HEK293 (cell line): ENCODE measurements at regions of chr11 and their contacts with region 1.

Region 1: DNA sequence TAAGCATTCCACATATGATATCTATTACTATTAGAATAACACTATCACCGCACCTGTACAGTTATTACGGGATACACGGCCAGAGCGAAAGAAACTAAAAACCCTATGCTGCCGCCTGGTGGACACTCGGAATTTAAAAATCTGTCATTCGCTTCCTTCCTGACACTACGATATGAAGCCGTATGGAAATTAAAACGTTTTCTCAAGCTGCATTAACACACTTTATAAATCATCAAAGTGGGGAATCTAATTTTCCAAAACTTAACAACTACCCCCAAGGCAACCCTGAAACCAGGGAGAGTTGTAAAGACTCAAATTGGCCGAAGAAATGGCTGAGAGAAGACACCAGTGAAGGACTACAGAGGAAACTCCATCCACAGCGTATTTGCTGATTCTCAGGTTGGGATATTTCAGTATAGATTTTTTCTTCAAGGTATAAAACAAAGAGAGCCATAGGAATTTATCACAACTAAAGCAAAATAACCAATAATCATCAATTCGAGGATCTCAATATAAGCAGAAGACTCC is 1.4 kb downstream of the CCDC73 start:
- H3K4me3 ChIP-seq: peak overlapping the region; percentile 17; the same call in 1 of the 2 replicates
- H3K27ac ChIP-seq: no peak overlapping the region
- H3K4me1 ChIP-seq: no peaks in the 10 kb centered on the region
- CTCF ChIP-seq: no peak

Region 2: DNA sequence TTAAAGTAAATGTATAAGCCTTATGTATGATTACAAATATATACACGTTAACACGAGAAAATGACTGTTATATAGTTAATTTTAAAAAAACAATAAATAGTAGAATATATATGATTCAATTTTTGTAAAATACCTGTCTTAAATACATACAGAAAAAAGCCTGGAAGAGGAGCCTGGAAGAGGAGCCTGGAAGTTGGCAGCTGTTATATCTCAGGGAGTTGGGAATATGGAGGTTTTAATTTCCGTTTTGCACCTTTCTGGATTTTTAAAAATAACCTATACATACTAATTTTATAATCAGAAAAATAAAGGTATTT is 469.2 kb before region 1 on chr11:
- CTCF ChIA-PET with region 1: interaction called, 21 read pairs
- POLR2A ChIA-PET with region 1: no interaction called
- H3K4me3 ChIP-seq: no peak overlapping the region
- H3K27ac ChIP-seq: no peak overlapping the region
- H3K4me1 ChIP-seq: no peaks in the 10 kb centered on the region
- CTCF ChIP-seq: no peak

Region 3: GRCh38 chr11:32385998-32386397 is 407.0 kb before region 1 on chr11:
- CTCF ChIA-PET with region 1: interaction called, 16 read pairs
- POLR2A ChIA-PET with region 1: no interaction called
- H3K4me3 ChIP-seq: no peak overlapping the region
- H3K27ac ChIP-seq: no peak overlapping the region
- H3K4me1 ChIP-seq: no peaks in the 10 kb centered on the region; the same call in 1 of the 2 replicates
- CTCF ChIP-seq: no peak

Region 4: DNA sequence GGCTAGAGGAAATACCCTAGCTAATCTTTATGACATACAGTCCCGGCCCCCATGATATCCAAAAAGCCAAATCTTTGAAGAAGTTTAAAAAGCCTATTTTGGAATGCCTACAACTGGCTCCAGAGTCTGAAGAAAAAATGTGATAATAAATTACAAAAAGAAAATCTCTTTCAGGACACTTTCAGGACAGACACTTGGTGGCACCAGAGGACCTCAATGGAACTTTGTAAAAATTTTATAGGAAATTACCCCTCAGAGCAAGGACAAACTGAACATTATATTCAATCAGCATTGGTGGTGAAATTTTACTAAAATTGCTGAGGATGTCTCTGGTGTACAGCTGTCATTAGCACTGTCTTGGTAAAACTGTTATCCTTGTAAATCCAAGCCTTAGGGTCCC is 79.5 kb before region 1 on chr11:
- CTCF ChIA-PET with region 1: interaction called, 36 read pairs
- POLR2A ChIA-PET with region 1: no interaction called
- H3K4me3 ChIP-seq: no peak overlapping the region
- H3K27ac ChIP-seq: no peak overlapping the region
- H3K4me1 ChIP-seq: no peaks in the 10 kb centered on the region
- CTCF ChIP-seq: no peak

Region 5: DNA sequence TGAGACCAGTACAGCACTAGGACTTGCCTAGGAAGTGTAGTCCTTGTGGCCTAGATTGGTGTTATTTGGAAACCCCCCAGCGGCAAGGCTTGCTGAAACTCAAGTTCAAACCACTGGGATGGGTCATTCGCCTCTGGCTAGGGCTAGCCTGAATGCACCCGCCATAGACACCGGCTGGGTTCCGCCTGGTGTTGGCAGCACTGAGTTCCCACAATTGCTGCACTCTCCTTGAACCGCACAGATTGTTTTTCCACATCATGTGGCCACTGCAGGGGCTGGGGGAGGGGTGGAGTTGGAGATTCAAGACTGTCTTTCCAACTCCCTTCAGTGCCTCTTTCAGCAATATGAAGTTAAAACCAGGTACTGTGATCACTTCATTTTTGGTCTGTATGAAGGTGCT is 41.6 kb before region 1 on chr11:
- CTCF ChIA-PET with region 1: interaction called, 22 read pairs
- POLR2A ChIA-PET with region 1: no interaction called
- H3K4me3 ChIP-seq: no peak overlapping the region
- H3K27ac ChIP-seq: no peak overlapping the region
- H3K4me1 ChIP-seq: no peaks in the 10 kb centered on the region
- CTCF ChIP-seq: no peak

Region 6: DNA sequence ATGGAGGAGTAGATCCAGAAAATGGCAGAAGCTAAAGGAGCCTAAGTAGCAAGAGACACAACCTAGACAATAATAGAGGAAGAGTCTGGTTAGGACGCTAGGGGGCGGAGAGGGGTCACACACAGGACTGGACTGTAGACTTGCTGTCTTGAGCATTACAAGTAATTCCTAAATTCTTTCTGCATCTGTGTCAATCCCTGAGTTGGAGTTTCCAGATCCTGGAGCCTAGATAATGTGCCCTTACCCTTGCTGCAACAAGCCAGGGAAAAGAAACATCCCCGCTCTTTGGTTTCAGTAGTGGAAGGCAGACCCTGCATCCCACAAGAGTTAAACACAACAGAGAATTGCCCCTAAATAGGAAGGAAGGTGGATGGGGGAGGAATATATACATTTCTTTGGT is 16.3 kb after region 1 on chr11:
- CTCF ChIA-PET with region 1: interaction called, 22 read pairs
- POLR2A ChIA-PET with region 1: no interaction called
- H3K4me3 ChIP-seq: no peak overlapping the region
- H3K27ac ChIP-seq: no peak overlapping the region
- H3K4me1 ChIP-seq: no peaks in the 10 kb centered on the region
- CTCF ChIP-seq: no peak